PC-9 (cell line): ENCODE measurements at regions of chrX and their contacts with region 1.

Region 1: GRCh38 chrX:74015379-74016019 is 288.5 kb upstream of the ZCCHC13 start:
- DNase-seq: peak; percentile 25 to 44
- H3K4me3 ChIP-seq: no peak overlapping the region
- H3K27ac ChIP-seq: no peak overlapping the region
- H3K4me1 ChIP-seq: no peaks in the 10 kb centered on the region
- H3K27me3 ChIP-seq: no peaks in the 10 kb centered on the region
- CTCF ChIP-seq: peak; percentile 82

Region 2: DNA sequence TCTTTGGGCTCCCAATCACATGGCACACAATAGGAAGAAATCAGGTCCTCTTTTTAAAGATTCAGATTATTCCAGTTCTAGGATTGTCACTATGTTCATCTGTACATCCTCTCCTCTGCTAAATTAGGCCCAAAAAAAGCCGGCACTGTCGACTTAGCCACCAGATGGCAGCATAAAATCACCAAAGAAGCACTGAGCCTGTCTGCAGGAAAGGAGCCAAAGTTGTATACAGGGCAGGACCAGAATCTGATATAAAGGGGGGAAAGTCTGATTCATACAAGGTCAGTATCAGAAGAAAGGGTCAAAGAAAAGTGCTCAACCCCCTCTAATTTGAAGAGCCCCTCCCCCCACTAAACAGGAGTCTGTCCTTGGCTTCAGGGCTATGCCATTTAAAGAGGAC is 160.0 kb before region 1 on chrX:
- CTCF ChIA-PET with region 1: no interaction called
- POLR2A ChIA-PET with region 1: no interaction called
- intact Hi-C with region 1: loop called (anchors 1 kb)
- DNase-seq: peak; percentile 40 to 58
- H3K4me3 ChIP-seq: no peak overlapping the region
- H3K27ac ChIP-seq: no peak overlapping the region
- H3K4me1 ChIP-seq: 0 out of 2 replicates have a peak, but pooled peaks cover 4% of the 10 kb centered on the region
- H3K27me3 ChIP-seq: no peaks in the 10 kb centered on the region
- CTCF ChIP-seq: peak; percentile 77

Region 3: GRCh38 chrX:73977534-73978169 is 37.8 kb before region 1 on chrX:
- CTCF ChIA-PET with region 1: interaction called, 14 read pairs
- POLR2A ChIA-PET with region 1: no interaction called
- intact Hi-C with region 1: no loop called
- DNase-seq: no peak
- H3K4me3 ChIP-seq: no peak overlapping the region
- H3K27ac ChIP-seq: no peak overlapping the region
- H3K4me1 ChIP-seq: no peaks in the 10 kb centered on the region
- H3K27me3 ChIP-seq: no peaks in the 10 kb centered on the region
- CTCF ChIP-seq: no peak

Region 4: GRCh38 chrX:74061879-74062278 is 46.4 kb after region 1 on chrX:
- CTCF ChIA-PET with region 1: no interaction called
- POLR2A ChIA-PET with region 1: no interaction called
- intact Hi-C with region 1: loop called (anchors 5 kb)
- DNase-seq: peak in 1 of 2 experiments; percentile 3
- H3K4me3 ChIP-seq: no peak overlapping the region
- H3K27ac ChIP-seq: no peak overlapping the region
- H3K4me1 ChIP-seq: peaks cover 36% of the 10 kb centered on the region
- H3K27me3 ChIP-seq: no peaks in the 10 kb centered on the region
- CTCF ChIP-seq: no peak

Region 5: DNA sequence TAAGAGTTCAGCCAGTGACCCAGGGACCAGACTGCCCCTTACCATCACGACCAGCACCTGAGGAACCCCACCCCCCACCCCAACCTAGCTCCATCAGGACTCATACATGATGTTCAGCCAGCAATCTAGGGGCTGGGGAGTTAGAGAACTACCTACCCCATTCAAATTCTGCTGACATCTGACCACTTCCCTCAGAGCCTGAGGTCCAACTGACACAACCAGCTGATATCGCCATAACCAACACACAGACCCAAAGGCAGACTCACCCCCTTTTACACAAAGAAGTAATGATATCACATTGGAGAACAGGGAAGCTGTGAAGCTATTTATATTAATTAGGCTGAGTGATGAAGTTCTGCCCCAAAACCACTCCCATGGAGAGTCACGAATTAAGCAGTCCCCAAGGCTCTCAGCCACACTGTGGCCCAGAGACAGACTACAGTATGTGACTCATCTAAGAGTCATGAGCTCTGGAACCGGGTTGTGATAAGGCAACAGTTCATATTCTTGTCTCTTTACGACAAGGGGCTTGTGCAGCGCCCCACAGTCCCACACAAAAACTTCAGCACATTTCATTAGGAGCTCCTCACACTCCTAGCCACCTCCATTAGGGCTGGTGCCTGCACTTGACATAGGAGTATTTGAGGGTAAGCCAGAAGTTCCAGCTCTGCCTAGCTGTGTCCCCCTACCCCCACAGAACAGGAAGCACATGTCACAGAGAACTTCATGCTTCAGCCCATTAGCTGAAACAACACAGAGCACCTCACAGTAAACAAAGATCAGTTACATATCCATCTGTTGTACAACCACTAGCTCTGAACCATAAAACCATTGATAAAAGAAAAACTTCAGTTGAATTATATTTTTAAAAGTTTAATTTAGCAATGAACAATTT is 103.8 kb after region 1 on chrX:
- CTCF ChIA-PET with region 1: no interaction called
- POLR2A ChIA-PET with region 1: no interaction called
- intact Hi-C with region 1: loop called (anchors 5 kb)
- DNase-seq: peak; percentile 40 to 78
- H3K4me3 ChIP-seq: peak overlapping the region; percentile 20; the same call in 1 of the 2 replicates
- H3K27ac ChIP-seq: peak overlapping the region; percentile 81
- H3K4me1 ChIP-seq: peaks cover 30% of the 10 kb centered on the region
- H3K27me3 ChIP-seq: no peaks in the 10 kb centered on the region
- CTCF ChIP-seq: no peak

Region 6: DNA sequence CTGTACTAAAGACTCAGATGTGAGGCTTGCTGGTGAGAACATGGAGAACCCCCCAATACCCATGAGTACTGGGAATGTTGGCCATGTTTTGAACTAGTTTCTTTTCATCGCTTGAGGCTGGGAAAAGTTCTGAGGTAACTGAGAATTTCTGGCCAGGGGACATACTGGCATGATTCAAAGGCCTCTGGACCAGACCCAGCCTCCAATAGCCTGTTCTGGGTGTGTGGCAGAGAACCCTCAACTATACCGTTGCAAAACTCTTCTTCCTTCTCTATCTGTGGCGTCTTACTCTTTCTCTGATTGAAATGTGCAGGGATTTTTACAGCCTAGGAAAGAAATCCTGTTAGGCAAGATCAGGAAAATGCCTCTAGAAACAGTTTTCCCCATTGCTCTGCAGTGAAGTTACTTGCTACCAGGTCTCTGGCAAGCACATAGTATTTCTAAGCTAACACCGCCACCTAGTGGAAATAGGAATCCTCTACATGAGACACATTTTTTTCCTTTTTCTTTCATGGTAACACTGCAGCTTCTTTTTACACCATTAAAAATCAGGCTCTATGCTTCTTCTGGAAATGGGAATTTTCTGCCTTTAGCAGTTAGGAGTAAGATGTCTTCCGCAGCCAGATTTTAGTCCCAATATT is 117.8 kb after region 1 on chrX:
- CTCF ChIA-PET with region 1: no interaction called
- POLR2A ChIA-PET with region 1: no interaction called
- intact Hi-C with region 1: loop called (anchors 2 kb)
- DNase-seq: peak; percentile 11 to 61
- H3K4me3 ChIP-seq: no peak overlapping the region
- H3K27ac ChIP-seq: no peak overlapping the region
- H3K4me1 ChIP-seq: peaks cover 5% of the 10 kb centered on the region
- H3K27me3 ChIP-seq: no peaks in the 10 kb centered on the region
- CTCF ChIP-seq: peak; percentile 81

Region 7: GRCh38 chrX:74343343-74344279 is 328.1 kb after region 1 on chrX:
- CTCF ChIA-PET with region 1: no interaction called
- POLR2A ChIA-PET with region 1: no interaction called
- intact Hi-C with region 1: loop called (anchors 1 kb)
- DNase-seq: peak; percentile 62 to 94
- H3K4me3 ChIP-seq: no peak overlapping the region
- H3K27ac ChIP-seq: peak overlapping the region; percentile 60
- H3K4me1 ChIP-seq: peaks cover 10% of the 10 kb centered on the region
- H3K27me3 ChIP-seq: no peaks in the 10 kb centered on the region
- CTCF ChIP-seq: peak; percentile 80